PC-3 (cell line): ENCODE measurements at regions of chr12 and their contacts with region 1.

Region 1: GRCh38 chr12:79420146-79420618 is 270.6 kb downstream of the PAWR start:
- DNase-seq: peak; percentile 95
- ATAC-seq: peak; percentile 55
- H3K4me3 ChIP-seq: 0 out of 2 replicates have a peak overlapping the region, but pooled peaks have one; percentile 11
- H3K27ac ChIP-seq: peak overlapping the region; percentile 63
- H3K4me1 ChIP-seq: peaks cover 86% of the 10 kb centered on the region
- H3K27me3 ChIP-seq: no peaks in the 10 kb centered on the region
- CTCF ChIP-seq: peak; percentile 89

Region 2: GRCh38 chr12:79252358-79253075 is 167.7 kb before region 1 on chr12:
- CTCF ChIA-PET with region 1: no interaction called
- POLR2A ChIA-PET with region 1: no interaction called
- intact Hi-C with region 1: no loop called
- DNase-seq: peak; percentile 49
- ATAC-seq: no peak
- H3K4me3 ChIP-seq: no peak overlapping the region
- H3K27ac ChIP-seq: no peak overlapping the region
- H3K4me1 ChIP-seq: peaks cover 44% of the 10 kb centered on the region
- H3K27me3 ChIP-seq: no peaks in the 10 kb centered on the region
- CTCF ChIP-seq: no peak

Region 3: GRCh38 chr12:79435742-79436141 is 15.6 kb after region 1 on chr12:
- CTCF ChIA-PET with region 1: no interaction called
- POLR2A ChIA-PET with region 1: no interaction called
- intact Hi-C with region 1: no loop called
- DNase-seq: no peak
- ATAC-seq: no peak
- H3K4me3 ChIP-seq: no peak overlapping the region
- H3K27ac ChIP-seq: no peak overlapping the region
- H3K4me1 ChIP-seq: peaks cover 28% of the 10 kb centered on the region
- H3K27me3 ChIP-seq: no peaks in the 10 kb centered on the region
- CTCF ChIP-seq: no peak

Region 4: GRCh38 chr12:79451978-79452377 is 31.8 kb after region 1 on chr12:
- CTCF ChIA-PET with region 1: interaction called, 3 read pairs
- POLR2A ChIA-PET with region 1: no interaction called
- intact Hi-C with region 1: loop called (anchors 1 kb)
- DNase-seq: peak; percentile 96
- ATAC-seq: peak; percentile 94
- H3K4me3 ChIP-seq: no peak overlapping the region
- H3K27ac ChIP-seq: peak overlapping the region; percentile 86
- H3K4me1 ChIP-seq: peaks cover 37% of the 10 kb centered on the region
- H3K27me3 ChIP-seq: no peaks in the 10 kb centered on the region
- CTCF ChIP-seq: no peak

Region 5: GRCh38 chr12:79503281-79503680 is 83.1 kb after region 1 on chr12:
- CTCF ChIA-PET with region 1: no interaction called
- POLR2A ChIA-PET with region 1: no interaction called
- intact Hi-C with region 1: no loop called
- DNase-seq: no peak
- ATAC-seq: no peak
- H3K4me3 ChIP-seq: no peak overlapping the region
- H3K27ac ChIP-seq: no peak overlapping the region
- H3K4me1 ChIP-seq: no peaks in the 10 kb centered on the region
- H3K27me3 ChIP-seq: no peaks in the 10 kb centered on the region
- CTCF ChIP-seq: no peak

Region 6: GRCh38 chr12:79531122-79531913 is 111.1 kb after region 1 on chr12:
- CTCF ChIA-PET with region 1: interaction called, 9 read pairs
- POLR2A ChIA-PET with region 1: no interaction called
- intact Hi-C with region 1: loop called (anchors 1 kb)
- DNase-seq: peak; percentile 35
- ATAC-seq: no peak
- H3K4me3 ChIP-seq: no peak overlapping the region
- H3K27ac ChIP-seq: no peak overlapping the region
- H3K4me1 ChIP-seq: peaks cover 50% of the 10 kb centered on the region
- H3K27me3 ChIP-seq: no peaks in the 10 kb centered on the region
- CTCF ChIP-seq: no peak

Region 7: DNA sequence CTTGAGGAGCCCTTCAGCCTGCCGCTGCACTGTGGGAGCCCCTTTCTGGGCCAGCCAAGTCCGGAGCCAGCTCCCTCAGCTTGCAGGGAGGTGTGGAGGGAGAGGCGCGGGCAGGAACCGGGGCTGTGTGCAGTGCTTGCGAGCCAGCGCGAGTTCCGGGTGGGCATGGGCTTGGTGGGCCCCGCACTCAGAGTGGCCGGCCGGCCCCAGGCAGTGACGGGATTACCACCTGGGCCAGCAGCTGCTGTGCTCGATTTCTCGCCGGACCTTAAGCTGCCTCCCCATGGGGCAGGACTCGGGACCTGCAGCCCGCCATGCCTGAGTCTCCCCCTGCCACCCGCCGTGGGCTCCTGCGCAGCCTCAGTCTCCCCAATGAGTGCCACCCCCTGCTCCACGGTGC is 153.6 kb after region 1 on chr12:
- CTCF ChIA-PET with region 1: no interaction called
- POLR2A ChIA-PET with region 1: no interaction called
- intact Hi-C with region 1: no loop called
- DNase-seq: no peak
- ATAC-seq: no peak
- H3K4me3 ChIP-seq: no peak overlapping the region
- H3K27ac ChIP-seq: no peak overlapping the region
- H3K4me1 ChIP-seq: no peaks in the 10 kb centered on the region
- H3K27me3 ChIP-seq: no peaks in the 10 kb centered on the region
- CTCF ChIP-seq: no peak

Region 8: GRCh38 chr12:79685068-79685467 is 264.9 kb after region 1 on chr12:
- CTCF ChIA-PET with region 1: no interaction called
- POLR2A ChIA-PET with region 1: no interaction called
- intact Hi-C with region 1: loop called (anchors 1 kb)
- DNase-seq: peak; percentile 95
- ATAC-seq: peak; percentile 70
- H3K4me3 ChIP-seq: peak overlapping the region; percentile 87
- H3K27ac ChIP-seq: peak overlapping the region; percentile 86
- H3K4me1 ChIP-seq: peaks cover 61% of the 10 kb centered on the region
- H3K27me3 ChIP-seq: no peaks in the 10 kb centered on the region
- CTCF ChIP-seq: no peak

Region 9: DNA sequence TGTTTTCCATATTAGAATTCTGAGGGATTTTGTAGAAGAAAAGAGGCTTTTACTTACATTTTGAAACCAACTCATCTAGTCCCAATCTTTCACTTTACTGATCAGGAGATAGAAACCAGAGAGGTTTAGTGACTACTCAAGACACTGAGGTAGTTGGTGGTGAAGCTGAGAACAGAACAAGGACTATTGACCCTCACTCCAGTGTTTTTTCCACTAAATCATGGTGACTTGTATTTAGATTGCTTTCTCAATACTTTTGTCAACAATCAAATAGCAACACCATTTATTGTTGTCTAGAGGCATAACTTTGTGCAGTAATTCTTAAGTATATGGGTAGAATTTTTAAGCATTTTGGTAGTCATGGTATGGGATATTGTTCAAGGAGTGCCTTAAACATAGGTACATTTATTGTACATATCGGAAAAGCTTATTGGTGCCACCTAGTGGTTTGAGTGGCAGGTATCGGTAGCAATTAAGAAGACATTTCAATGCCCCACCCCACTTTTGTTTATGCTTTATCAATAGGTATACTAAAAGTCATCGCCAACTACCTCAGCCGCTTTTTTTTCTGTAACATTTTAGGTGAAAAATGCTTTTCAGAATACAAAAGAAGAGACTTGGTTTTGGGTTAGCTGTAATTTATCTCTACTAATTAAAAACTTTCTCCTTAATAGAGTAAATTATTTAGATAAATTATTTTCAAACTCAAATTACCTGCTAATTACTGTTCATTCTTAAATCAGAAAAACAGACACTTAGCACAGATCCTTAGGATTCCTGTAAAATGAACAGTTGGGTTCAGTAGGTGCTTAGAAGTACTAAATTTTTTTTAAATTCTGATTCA is 317.9 kb after region 1 on chr12:
- CTCF ChIA-PET with region 1: no interaction called
- POLR2A ChIA-PET with region 1: no interaction called
- intact Hi-C with region 1: loop called (anchors 1 kb)
- DNase-seq: peak; percentile 89
- ATAC-seq: peak; percentile 72
- H3K4me3 ChIP-seq: no peak overlapping the region
- H3K27ac ChIP-seq: no peak overlapping the region
- H3K4me1 ChIP-seq: peaks cover 4% of the 10 kb centered on the region; the same call in 1 of the 2 replicates
- H3K27me3 ChIP-seq: no peaks in the 10 kb centered on the region
- CTCF ChIP-seq: peak; percentile 87

Region 10: DNA sequence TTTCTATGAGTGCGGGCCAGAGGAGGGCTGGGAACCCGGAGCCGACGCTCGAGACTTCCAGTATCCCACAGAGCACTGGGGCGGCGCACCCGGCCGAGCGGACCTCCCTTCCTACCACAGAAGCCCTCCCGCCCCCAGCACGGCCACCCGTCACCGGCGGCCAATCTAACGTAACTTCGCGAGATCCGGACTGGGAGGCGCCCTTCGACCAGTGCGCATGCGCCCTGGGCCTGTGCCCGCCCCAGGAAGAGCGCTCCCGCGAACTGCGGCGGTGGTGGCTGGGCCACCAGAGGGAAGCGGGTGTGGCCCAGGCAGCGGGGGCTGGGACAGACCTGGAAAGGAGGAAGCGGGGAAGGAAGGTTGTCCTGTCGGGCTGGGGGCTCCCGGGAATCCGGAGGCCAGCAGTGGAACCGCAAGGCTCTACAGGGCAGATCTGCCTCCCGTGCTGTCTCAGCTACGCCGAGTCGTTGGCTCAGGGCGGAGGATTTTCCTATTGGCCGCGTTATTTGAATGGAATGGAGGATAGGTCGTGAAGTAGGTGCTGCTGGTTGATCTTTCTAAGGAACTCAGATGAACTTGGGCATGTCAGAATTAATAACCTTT is 514.9 kb after region 1 on chr12 and contains the start of gene PPP1R12A:
- CTCF ChIA-PET with region 1: no interaction called
- POLR2A ChIA-PET with region 1: no interaction called
- intact Hi-C with region 1: loop called (anchors 10 kb)
- DNase-seq: peak; percentile 98
- ATAC-seq: peak; percentile 88
- H3K4me3 ChIP-seq: peak within 1 kb of the TSS; percentile 95
- H3K27ac ChIP-seq: peak within 1 kb of the TSS; percentile 73
- H3K4me1 ChIP-seq: peaks cover 19% of the 10 kb centered on the region
- H3K27me3 ChIP-seq: no peaks in the 10 kb centered on the region
- CTCF ChIP-seq: no peak
- total RNA-seq, gene PPP1R12A: 43.2 and 67.5 TPM in 2 replicates